Natural killer cell (primary cell): ENCODE measurements at regions of chr9 and their contacts with region 1.

Region 1: GRCh38 chr9:133792721-133793470 is 54.7 kb upstream of the SARDH start:
- DNase-seq: peak; percentile 56 to 66
- ATAC-seq: peak; percentile 70 to 96 (median 92)
- H3K4me3 ChIP-seq: no peak overlapping the region
- H3K4me3 Mint-ChIP-seq: no peak overlapping the region
- H3K27ac ChIP-seq: no peak overlapping the region
- H3K27ac Mint-ChIP-seq: no peak overlapping the region
- H3K4me1 ChIP-seq: peaks cover 35% of the 10 kb centered on the region
- H3K4me1 Mint-ChIP-seq: peaks cover 0 to 13% of the 10 kb centered on the region in 2 donors
- H3K27me3 ChIP-seq: no peaks in the 10 kb centered on the region
- H3K27me3 Mint-ChIP-seq: no peaks in the 10 kb centered on the region
- CTCF ChIP-seq: peak; percentile 83

Region 2: GRCh38 chr9:133994353-133995011 is 201.6 kb after region 1 on chr9:
- intact Hi-C with region 1: loop called (anchors 1 kb)
- DNase-seq: peak; percentile 77 to 85
- ATAC-seq: peak; percentile 54 to 55 (median 54)
- H3K4me3 ChIP-seq: no peak overlapping the region
- H3K4me3 Mint-ChIP-seq: peak overlapping the region; percentile 78
- H3K27ac ChIP-seq: no peak overlapping the region
- H3K27ac Mint-ChIP-seq: no peak overlapping the region
- H3K4me1 ChIP-seq: peaks cover 33% of the 10 kb centered on the region
- H3K4me1 Mint-ChIP-seq: peaks cover 0 to 7% of the 10 kb centered on the region in 2 donors
- H3K27me3 ChIP-seq: peaks cover 11% of the 10 kb centered on the region
- H3K27me3 Mint-ChIP-seq: peaks cover 0 to 8% of the 10 kb centered on the region in 2 donors
- CTCF ChIP-seq: peak; percentile 99

Region 3: DNA sequence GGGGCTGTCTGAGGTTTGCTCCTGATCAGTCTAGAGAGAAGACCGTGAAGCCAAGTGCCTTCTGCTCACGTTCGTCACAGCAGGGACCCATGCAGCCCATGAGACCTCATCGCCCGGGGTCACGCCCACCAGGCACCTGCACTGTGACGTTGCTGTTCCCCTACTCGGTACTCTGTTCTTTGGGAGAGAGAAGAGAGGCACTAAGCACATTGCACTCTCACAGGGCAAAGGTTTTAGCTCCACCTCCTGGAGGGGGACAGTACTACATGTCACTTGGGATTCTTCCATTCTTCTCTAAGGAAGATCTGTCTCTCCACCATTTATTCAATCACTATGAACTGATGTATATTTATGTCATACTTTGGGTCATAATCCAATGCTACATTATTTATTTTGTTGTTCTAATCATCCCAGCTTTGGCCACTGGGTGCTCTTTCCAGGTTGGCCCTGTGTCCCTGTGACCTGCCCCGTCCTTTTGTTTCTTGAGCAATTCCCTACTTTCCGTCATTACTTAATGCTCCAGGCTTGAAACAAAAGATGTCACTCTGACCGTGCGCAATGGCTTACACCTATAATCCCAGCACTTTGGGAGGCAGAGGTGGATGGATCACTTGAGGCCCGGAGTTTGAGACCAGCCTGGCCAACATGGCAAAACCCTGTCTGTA is 306.4 kb after region 1 on chr9:
- intact Hi-C with region 1: loop called (anchors 2 kb)
- DNase-seq: peak in 1 of 2 donors; percentile 78
- ATAC-seq: peak; percentile 86 to 89 (median 86)
- H3K4me3 ChIP-seq: no peak overlapping the region
- H3K4me3 Mint-ChIP-seq: no peak overlapping the region
- H3K27ac ChIP-seq: no peak overlapping the region
- H3K27ac Mint-ChIP-seq: no peak overlapping the region
- H3K4me1 ChIP-seq: no peaks in the 10 kb centered on the region
- H3K4me1 Mint-ChIP-seq: no peaks in the 10 kb centered on the region
- H3K27me3 ChIP-seq: peaks cover 2% of the 10 kb centered on the region
- H3K27me3 Mint-ChIP-seq: peaks cover 3 to 17% of the 10 kb centered on the region in 2 donors
- CTCF ChIP-seq: peak; percentile 69